Naive thymus-derived CD4-positive, alpha-beta T cell (primary cell): ENCODE measurements at regions of chr1 and their contacts with region 1.

Region 1: GRCh38 chr1:171644805-171645483 is 7.5 kb downstream of the MYOC start:
- DNase-seq: peak; percentile 19 to 73 (median 62)
- ATAC-seq: peak; percentile 90
- H3K4me3 ChIP-seq: no peak overlapping the region
- H3K4me3 Mint-ChIP-seq: peak overlapping the region in 4 of 10 donors; percentile 2 to 27 (median 14)
- H3K27ac ChIP-seq: no peak overlapping the region
- H3K27ac Mint-ChIP-seq: peak overlapping the region in 3 of 9 donors; percentile 42 to 82 (median 77)
- H3K4me1 ChIP-seq: peaks cover 0 to 4% of the 10 kb centered on the region in 2 donors
- H3K4me1 Mint-ChIP-seq: peaks cover 4 to 12% (median 6%) of the 10 kb centered on the region in 7 donors
- H3K27me3 ChIP-seq: no peaks in the 10 kb centered on the region
- H3K27me3 Mint-ChIP-seq: peaks cover 0 to 9% (median 0%) of the 10 kb centered on the region in 5 donors

Region 2: DNA sequence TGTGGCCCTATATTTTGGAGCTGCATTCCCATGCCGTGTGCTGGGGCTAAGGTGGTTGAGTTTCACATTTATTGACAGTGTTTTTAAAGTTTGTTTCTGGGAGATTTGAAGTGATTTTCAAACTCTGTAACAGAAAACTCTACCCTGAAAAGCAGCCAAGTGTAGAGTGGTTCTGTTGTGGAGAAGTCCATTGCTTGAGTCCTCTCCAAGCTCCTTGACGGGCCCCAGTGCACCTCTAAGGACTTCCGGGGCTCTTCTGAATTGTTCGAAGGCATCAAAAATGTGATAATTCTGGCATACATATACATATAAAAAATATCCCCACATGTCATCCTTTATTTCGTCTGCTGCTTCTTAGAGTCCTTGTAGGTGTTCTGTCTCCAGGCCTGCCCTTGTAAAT is 17.9 kb before region 1 on chr1:
- CTCF ChIA-PET with region 1: no interaction called
- POLR2A ChIA-PET with region 1: no interaction called
- intact Hi-C with region 1: no loop called
- DNase-seq: no peak
- ATAC-seq: no peak
- H3K4me3 ChIP-seq: no peak overlapping the region
- H3K4me3 Mint-ChIP-seq: no peak overlapping the region
- H3K27ac ChIP-seq: no peak overlapping the region
- H3K27ac Mint-ChIP-seq: no peak overlapping the region
- H3K4me1 ChIP-seq: no peaks in the 10 kb centered on the region
- H3K4me1 Mint-ChIP-seq: no peaks in the 10 kb centered on the region
- H3K27me3 ChIP-seq: peaks cover 0 to 4% of the 10 kb centered on the region in 2 donors
- H3K27me3 Mint-ChIP-seq: peaks cover 14 to 20% (median 15%) of the 10 kb centered on the region in 5 donors

Region 3: GRCh38 chr1:171663854-171664575 is 19.1 kb after region 1 on chr1:
- CTCF ChIA-PET with region 1: no interaction called
- POLR2A ChIA-PET with region 1: no interaction called
- intact Hi-C with region 1: no loop called
- DNase-seq: no peak
- ATAC-seq: no peak
- H3K4me3 ChIP-seq: no peak overlapping the region
- H3K4me3 Mint-ChIP-seq: no peak overlapping the region
- H3K27ac ChIP-seq: no peak overlapping the region
- H3K27ac Mint-ChIP-seq: no peak overlapping the region
- H3K4me1 ChIP-seq: no peaks in the 10 kb centered on the region
- H3K4me1 Mint-ChIP-seq: no peaks in the 10 kb centered on the region
- H3K27me3 ChIP-seq: no peaks in the 10 kb centered on the region
- H3K27me3 Mint-ChIP-seq: peaks cover 0 to 6% (median 0%) of the 10 kb centered on the region in 5 donors

Region 4: DNA sequence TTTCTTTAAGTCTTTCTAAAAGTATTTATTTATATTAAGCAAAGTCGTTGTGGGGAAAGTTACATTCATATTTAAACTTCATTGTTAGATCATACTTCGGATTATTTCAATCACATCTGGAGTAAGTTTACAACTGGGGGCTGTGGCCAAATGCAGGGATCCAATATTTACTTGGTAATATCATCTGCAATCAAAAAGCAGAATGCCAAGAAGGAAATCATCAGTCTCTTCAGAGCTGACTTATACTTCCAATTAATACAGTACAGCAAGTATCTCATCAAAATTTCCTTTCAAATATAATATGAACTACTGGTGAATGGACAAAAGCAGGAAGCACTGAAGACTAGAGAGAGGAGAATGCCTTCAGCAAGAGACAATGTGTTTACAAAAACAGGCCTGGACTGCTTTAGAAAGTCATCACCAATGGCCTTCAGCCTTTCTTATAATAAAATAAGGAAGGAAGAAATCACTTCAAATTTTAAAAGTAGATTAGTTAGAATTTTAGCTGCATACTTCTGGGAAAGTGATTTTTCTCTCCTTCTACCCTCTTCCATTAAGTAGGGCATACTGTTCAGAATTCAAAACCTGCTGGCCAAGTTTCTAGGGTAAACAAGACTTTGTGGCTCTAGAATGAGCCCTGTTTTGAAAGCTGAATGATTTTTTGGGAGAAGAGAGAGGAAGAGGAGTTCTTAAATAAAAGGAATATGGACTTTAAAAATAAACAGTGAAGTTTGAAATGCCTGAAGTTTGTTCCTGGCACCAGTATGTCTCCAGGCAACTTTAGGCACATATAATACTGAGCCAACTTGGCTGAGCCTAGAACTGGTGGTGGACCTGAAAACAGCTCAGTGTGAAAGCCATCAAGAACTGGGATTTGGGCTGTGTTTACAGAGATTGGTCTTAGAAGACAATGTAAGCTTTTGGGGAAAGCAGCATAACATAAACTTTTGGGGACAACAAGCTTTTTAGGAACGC is 29.8 kb after region 1 on chr1:
- CTCF ChIA-PET with region 1: no interaction called
- POLR2A ChIA-PET with region 1: no interaction called
- intact Hi-C with region 1: no loop called
- DNase-seq: no peak
- ATAC-seq: no peak
- H3K4me3 ChIP-seq: no peak overlapping the region
- H3K4me3 Mint-ChIP-seq: no peak overlapping the region
- H3K27ac ChIP-seq: no peak overlapping the region
- H3K27ac Mint-ChIP-seq: no peak overlapping the region
- H3K4me1 ChIP-seq: no peaks in the 10 kb centered on the region
- H3K4me1 Mint-ChIP-seq: no peaks in the 10 kb centered on the region
- H3K27me3 ChIP-seq: peaks cover 0 to 4% of the 10 kb centered on the region in 2 donors
- H3K27me3 Mint-ChIP-seq: peaks cover 4 to 23% (median 6%) of the 10 kb centered on the region in 5 donors

Region 5: DNA sequence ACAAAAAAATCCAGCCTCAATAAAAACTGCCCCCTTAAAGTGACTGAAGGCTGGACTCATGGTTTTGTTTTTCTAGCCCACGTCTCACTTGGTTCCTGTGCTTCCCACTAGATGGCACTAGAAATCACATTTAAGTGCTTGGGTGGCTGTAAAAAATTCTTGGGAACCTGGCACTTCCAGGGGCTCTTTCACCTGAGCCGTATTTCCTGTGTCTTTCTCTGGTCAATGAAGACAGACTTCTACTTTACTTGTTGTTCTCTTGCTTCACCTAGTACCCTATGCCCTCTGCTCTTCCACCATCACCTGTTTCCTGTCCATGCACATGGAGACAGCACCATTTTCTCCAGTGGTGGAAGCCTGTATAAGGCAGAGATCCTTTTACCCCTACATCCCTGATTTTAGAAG is 156.5 kb after region 1 on chr1:
- CTCF ChIA-PET with region 1: interaction called, 4 read pairs
- POLR2A ChIA-PET with region 1: no interaction called
- intact Hi-C with region 1: loop called in 1 of 2 experiments (anchors 1 kb)
- DNase-seq: peak in 3 of 9 donors; percentile 12 to 17 (median 13)
- ATAC-seq: no peak
- H3K4me3 ChIP-seq: no peak overlapping the region
- H3K4me3 Mint-ChIP-seq: no peak overlapping the region
- H3K27ac ChIP-seq: no peak overlapping the region
- H3K27ac Mint-ChIP-seq: peak overlapping the region in 5 of 9 donors; percentile 25 to 80 (median 40)
- H3K4me1 ChIP-seq: peaks cover 0 to 3% of the 10 kb centered on the region in 2 donors
- H3K4me1 Mint-ChIP-seq: peaks cover 0 to 13% (median 8%) of the 10 kb centered on the region in 7 donors
- H3K27me3 ChIP-seq: no peaks in the 10 kb centered on the region
- H3K27me3 Mint-ChIP-seq: no peaks in the 10 kb centered on the region